CD4-positive, alpha-beta memory T cell (primary cell): ENCODE measurements at regions of chr6 and their contacts with region 1.

Region 1: GRCh38 chr6:142885182-142885867 is 59.7 kb downstream of the HIVEP2 start:
- DNase-seq: peak; percentile 75 to 90 (median 80)
- H3K4me3 ChIP-seq: peak overlapping the region; percentile 54 to 64
- H3K4me3 Mint-ChIP-seq: peak overlapping the region; percentile 90 to 99 (median 94)
- H3K27ac ChIP-seq: peak overlapping the region; percentile 80
- H3K27ac Mint-ChIP-seq: peak overlapping the region; percentile 92 to 100 (median 100)
- H3K4me1 ChIP-seq: peaks cover 100% of the 10 kb centered on the region
- H3K4me1 Mint-ChIP-seq: peaks cover 70 to 98% (median 87%) of the 10 kb centered on the region in 4 donors
- H3K27me3 ChIP-seq: no peaks in the 10 kb centered on the region
- H3K27me3 Mint-ChIP-seq: no peaks in the 10 kb centered on the region

Region 2: GRCh38 chr6:142692942-142693341 is 192.4 kb before region 1 on chr6:
- CTCF ChIA-PET with region 1: interaction called, 8 read pairs
- POLR2A ChIA-PET with region 1: no interaction called
- intact Hi-C with region 1: loop called (anchors 2 kb)
- DNase-seq: peak; percentile 54 to 62 (median 58)
- H3K4me3 ChIP-seq: no peak overlapping the region
- H3K4me3 Mint-ChIP-seq: peak overlapping the region in 1 of 8 donors; percentile 58
- H3K27ac ChIP-seq: no peak overlapping the region
- H3K27ac Mint-ChIP-seq: peak overlapping the region in 4 of 7 donors; percentile 0 to 74 (median 60)
- H3K4me1 ChIP-seq: peaks cover 7% of the 10 kb centered on the region
- H3K4me1 Mint-ChIP-seq: peaks cover 5 to 21% (median 8%) of the 10 kb centered on the region in 4 donors
- H3K27me3 ChIP-seq: no peaks in the 10 kb centered on the region
- H3K27me3 Mint-ChIP-seq: no peaks in the 10 kb centered on the region

Region 3: GRCh38 chr6:142773859-142774648 is 111.3 kb before region 1 on chr6:
- CTCF ChIA-PET with region 1: interaction called, 5 read pairs
- POLR2A ChIA-PET with region 1: interaction called, 3 read pairs
- intact Hi-C with region 1: loop called (anchors 2 kb)
- DNase-seq: peak; percentile 45 to 57 (median 50)
- H3K4me3 ChIP-seq: peak overlapping the region in 1 of 2 donors; percentile 32
- H3K4me3 Mint-ChIP-seq: peak overlapping the region; percentile 57 to 88 (median 74)
- H3K27ac ChIP-seq: peak overlapping the region; percentile 53
- H3K27ac Mint-ChIP-seq: peak overlapping the region; percentile 74 to 93 (median 87)
- H3K4me1 ChIP-seq: peaks cover 38% of the 10 kb centered on the region
- H3K4me1 Mint-ChIP-seq: peaks cover 38 to 72% (median 54%) of the 10 kb centered on the region in 4 donors
- H3K27me3 ChIP-seq: no peaks in the 10 kb centered on the region
- H3K27me3 Mint-ChIP-seq: no peaks in the 10 kb centered on the region

Region 4: GRCh38 chr6:142845624-142846458 is 39.5 kb before region 1 on chr6:
- CTCF ChIA-PET with region 1: interaction called, 9 read pairs
- POLR2A ChIA-PET with region 1: interaction called, 40 read pairs
- intact Hi-C with region 1: loop called (anchors 1 kb)
- DNase-seq: peak; percentile 59 to 77 (median 62)
- H3K4me3 ChIP-seq: peak overlapping the region; percentile 31 to 55
- H3K4me3 Mint-ChIP-seq: peak overlapping the region; percentile 78 to 95 (median 87)
- H3K27ac ChIP-seq: peak overlapping the region; percentile 83
- H3K27ac Mint-ChIP-seq: peak overlapping the region; percentile 89 to 99 (median 96)
- H3K4me1 ChIP-seq: peaks cover 96% of the 10 kb centered on the region
- H3K4me1 Mint-ChIP-seq: peaks cover 65 to 99% (median 85%) of the 10 kb centered on the region in 4 donors
- H3K27me3 ChIP-seq: no peaks in the 10 kb centered on the region
- H3K27me3 Mint-ChIP-seq: no peaks in the 10 kb centered on the region

Region 5: DNA sequence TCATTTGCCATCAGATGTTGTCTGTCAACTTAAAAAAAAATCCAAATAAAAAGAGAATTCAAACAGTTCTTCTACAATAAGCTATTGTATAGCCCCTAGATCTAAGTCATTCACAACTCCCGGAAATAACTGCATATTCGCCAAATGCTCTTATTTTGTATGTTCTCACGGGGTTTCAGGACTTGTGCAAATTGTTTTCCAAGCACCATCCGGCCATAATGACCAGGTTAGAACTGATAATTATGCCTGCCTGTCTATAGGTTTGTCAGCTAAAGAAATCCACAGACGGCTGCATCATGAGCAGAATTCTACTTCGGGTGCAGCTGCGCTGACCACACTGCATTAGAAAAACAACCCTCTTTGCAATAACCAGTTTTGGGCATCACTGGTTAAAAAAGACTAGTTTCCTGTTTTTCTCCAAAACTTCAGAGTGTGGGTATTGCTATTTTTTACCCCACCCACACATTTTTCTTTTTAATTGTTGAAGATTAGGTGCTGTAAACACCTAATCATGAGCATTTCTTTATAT is 28.0 kb before region 1 on chr6:
- CTCF ChIA-PET with region 1: interaction called, 11 read pairs
- POLR2A ChIA-PET with region 1: interaction called, 124 read pairs
- intact Hi-C with region 1: loop called (anchors 1 kb)
- DNase-seq: peak; percentile 55 to 66 (median 61)
- H3K4me3 ChIP-seq: peak overlapping the region; percentile 32 to 51
- H3K4me3 Mint-ChIP-seq: peak overlapping the region; percentile 81 to 94 (median 86)
- H3K27ac ChIP-seq: peak overlapping the region; percentile 81
- H3K27ac Mint-ChIP-seq: peak overlapping the region; percentile 91 to 98 (median 95)
- H3K4me1 ChIP-seq: peaks cover 96% of the 10 kb centered on the region
- H3K4me1 Mint-ChIP-seq: peaks cover 75 to 95% (median 86%) of the 10 kb centered on the region in 4 donors
- H3K27me3 ChIP-seq: no peaks in the 10 kb centered on the region
- H3K27me3 Mint-ChIP-seq: no peaks in the 10 kb centered on the region

Region 6: GRCh38 chr6:142902636-142903053 is 17.3 kb after region 1 on chr6:
- CTCF ChIA-PET with region 1: interaction called, 10 read pairs
- POLR2A ChIA-PET with region 1: interaction called, 45 read pairs
- intact Hi-C with region 1: loop called (anchors 1 kb)
- DNase-seq: peak; percentile 85 to 92 (median 87)
- H3K4me3 ChIP-seq: peak overlapping the region in 1 of 2 donors; percentile 25
- H3K4me3 Mint-ChIP-seq: peak overlapping the region in 7 of 8 donors; percentile 66 to 91 (median 82)
- H3K27ac ChIP-seq: peak overlapping the region; percentile 86
- H3K27ac Mint-ChIP-seq: peak overlapping the region in 3 of 7 donors; percentile 98 to 99 (median 98)
- H3K4me1 ChIP-seq: peaks cover 88% of the 10 kb centered on the region
- H3K4me1 Mint-ChIP-seq: peaks cover 10 to 54% (median 34%) of the 10 kb centered on the region in 4 donors
- H3K27me3 ChIP-seq: no peaks in the 10 kb centered on the region
- H3K27me3 Mint-ChIP-seq: no peaks in the 10 kb centered on the region

Region 7: GRCh38 chr6:142926494-142927270 is 41.4 kb after region 1 on chr6:
- CTCF ChIA-PET with region 1: no interaction called
- POLR2A ChIA-PET with region 1: interaction called, 14 read pairs
- intact Hi-C with region 1: loop called (anchors 1 kb)
- DNase-seq: peak; percentile 82 to 87 (median 86)
- H3K4me3 ChIP-seq: peak overlapping the region; percentile 82 to 86
- H3K4me3 Mint-ChIP-seq: peak overlapping the region; percentile 88 to 99 (median 94)
- H3K27ac ChIP-seq: peak overlapping the region; percentile 98
- H3K27ac Mint-ChIP-seq: peak overlapping the region; percentile 90 to 100 (median 98)
- H3K4me1 ChIP-seq: peaks cover 60% of the 10 kb centered on the region
- H3K4me1 Mint-ChIP-seq: peaks cover 42 to 77% (median 56%) of the 10 kb centered on the region in 4 donors
- H3K27me3 ChIP-seq: no peaks in the 10 kb centered on the region
- H3K27me3 Mint-ChIP-seq: no peaks in the 10 kb centered on the region

Region 8: GRCh38 chr6:143064951-143065683 is 179.8 kb after region 1 on chr6:
- CTCF ChIA-PET with region 1: no interaction called
- POLR2A ChIA-PET with region 1: no interaction called
- intact Hi-C with region 1: no loop called
- DNase-seq: no peak
- H3K4me3 ChIP-seq: no peak overlapping the region
- H3K4me3 Mint-ChIP-seq: no peak overlapping the region
- H3K27ac ChIP-seq: no peak overlapping the region
- H3K27ac Mint-ChIP-seq: peak overlapping the region in 1 of 7 donors; percentile 0
- H3K4me1 ChIP-seq: peaks cover 9% of the 10 kb centered on the region
- H3K4me1 Mint-ChIP-seq: peaks cover 10 to 19% (median 16%) of the 10 kb centered on the region in 4 donors
- H3K27me3 ChIP-seq: no peaks in the 10 kb centered on the region
- H3K27me3 Mint-ChIP-seq: peaks cover 0 to 2% of the 10 kb centered on the region in 2 donors